ENCODE measurements at regions of chr19 and their contacts with region 1.

Region 1: DNA sequence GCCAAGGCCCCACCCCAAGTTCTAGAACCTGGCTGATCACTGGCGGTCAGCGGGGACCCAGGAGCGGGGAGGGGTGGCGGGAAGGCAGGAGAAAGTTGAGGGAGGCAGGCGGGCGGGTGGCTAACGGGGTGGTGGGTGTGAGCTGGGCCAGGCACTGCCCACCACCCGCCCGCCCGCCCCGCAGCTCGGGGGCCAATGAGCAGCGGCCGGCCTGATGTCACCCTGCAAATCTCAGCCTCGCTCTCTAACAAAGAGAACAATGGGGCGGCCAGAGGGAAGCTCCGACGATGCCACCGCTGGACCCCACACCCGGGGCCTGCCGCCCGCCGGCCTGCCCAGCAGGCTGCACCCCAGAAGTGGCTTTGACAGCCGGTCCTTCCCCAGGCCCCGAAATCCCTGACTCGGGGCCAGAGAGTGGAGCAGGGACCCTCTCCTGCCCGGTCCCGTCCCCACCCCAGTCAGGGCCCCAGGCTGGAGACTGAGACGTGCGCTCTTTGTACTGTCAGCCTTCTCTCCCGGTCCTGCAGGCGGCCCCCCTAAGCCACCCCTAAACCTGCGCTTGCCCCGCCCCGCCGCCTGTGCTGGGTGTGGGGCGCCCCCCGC is 1.5 kb downstream of the MEX3D start:
- DNase-seq: peak; percentile 19
- H3K4me3 ChIP-seq: peak overlapping the region; percentile 83
- H3K27me3 ChIP-seq: no peaks in the 10 kb centered on the region
- CTCF ChIP-seq: no peak

Region 2: GRCh38 chr19:1540365-1540925 is 26.2 kb before region 1 on chr19:
- CTCF ChIA-PET with region 1: interaction called, 33 read pairs
- POLR2A ChIA-PET with region 1: no interaction called
- DNase-seq: no peak
- H3K4me3 ChIP-seq: no peak overlapping the region
- H3K27me3 ChIP-seq: peaks cover 4% of the 10 kb centered on the region
- CTCF ChIP-seq: no peak